Naive thymus-derived CD8-positive, alpha-beta T cell (primary cell): ENCODE measurements at regions of chr10 and their contacts with region 1.

Region 1: GRCh38 chr10:118729641-118730258 is 25.0 kb downstream of the CACUL1 start:
- DNase-seq: peak in 4 of 10 donors; percentile 13 to 52 (median 35)
- ATAC-seq: peak; percentile 63 to 72
- H3K4me3 Mint-ChIP-seq: peak overlapping the region; percentile 6 to 71 (median 50)
- H3K27ac Mint-ChIP-seq: peak overlapping the region; percentile 59 to 95 (median 74)
- H3K4me1 Mint-ChIP-seq: peaks cover 35 to 74% (median 71%) of the 10 kb centered on the region in 4 donors
- H3K27me3 Mint-ChIP-seq: no peaks in the 10 kb centered on the region

Region 2: GRCh38 chr10:118712930-118713634 is 16.7 kb before region 1 on chr10:
- POLR2A ChIA-PET with region 1: no interaction called
- DNase-seq: no peak
- ATAC-seq: no peak
- H3K4me3 Mint-ChIP-seq: no peak overlapping the region
- H3K27ac Mint-ChIP-seq: peak overlapping the region in 1 of 10 donors; percentile 56
- H3K4me1 Mint-ChIP-seq: peaks cover 5 to 18% (median 12%) of the 10 kb centered on the region in 4 donors
- H3K27me3 Mint-ChIP-seq: no peaks in the 10 kb centered on the region

Region 3: GRCh38 chr10:118754720-118755480 is 25.1 kb after region 1 on chr10 and contains the start of gene CACUL1:
- POLR2A ChIA-PET with region 1: interaction called, 38 read pairs
- DNase-seq: peak; percentile 98 to 100 (median 100)
- ATAC-seq: peak; percentile 94 to 97
- H3K4me3 Mint-ChIP-seq: peak within 1 kb of the TSS; percentile 89 to 98 (median 92)
- H3K27ac Mint-ChIP-seq: peak within 1 kb of the TSS; percentile 85 to 97 (median 95)
- H3K4me1 Mint-ChIP-seq: peaks cover 22 to 44% (median 41%) of the 10 kb centered on the region in 4 donors
- H3K27me3 Mint-ChIP-seq: peaks cover 0 to 4% (median 0%) of the 10 kb centered on the region in 5 donors
- polyA plus RNA-seq, gene CACUL1: 23.1 to 29.2 (median 25.4) TPM